ENCODE measurements at regions of chr2 and their contacts with region 1.

Region 1: DNA sequence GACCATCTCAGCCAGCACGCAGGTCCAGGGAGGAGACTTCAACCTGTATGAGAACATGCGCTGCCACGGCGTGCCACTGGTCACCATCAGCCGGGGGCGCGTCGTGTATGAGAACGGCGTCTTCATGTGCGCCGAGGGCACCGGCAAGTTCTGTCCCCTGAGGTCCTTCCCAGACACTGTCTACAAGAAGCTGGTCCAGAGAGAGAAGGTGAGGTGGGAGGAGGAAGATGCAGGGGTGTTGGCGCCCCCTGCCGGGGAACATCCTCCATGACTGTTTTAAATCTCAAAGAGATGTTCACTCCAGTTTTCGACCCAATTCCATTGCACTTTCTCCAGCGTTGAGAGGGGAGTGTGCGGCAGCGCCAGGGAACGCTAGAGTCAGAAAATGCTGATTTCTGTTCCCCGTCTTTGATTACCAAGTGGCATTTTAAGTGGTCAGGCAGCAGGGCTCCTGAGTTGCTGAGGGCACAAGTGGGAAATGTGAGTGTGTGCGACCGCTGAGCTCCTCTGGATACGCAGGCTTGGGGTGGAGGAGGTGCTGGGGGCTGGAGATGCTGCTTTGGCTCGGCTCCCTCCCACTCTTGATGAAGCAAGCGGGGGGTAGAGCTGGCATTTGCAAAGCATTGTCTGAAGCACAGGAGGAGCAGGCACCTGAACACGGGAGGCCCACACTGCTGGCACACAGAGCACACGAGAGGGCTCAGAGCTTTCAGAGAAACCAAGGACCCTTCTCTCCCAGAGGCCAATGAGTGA is 27.7 kb upstream of the MAPRE3 start:
- DNase-seq: peak; percentile 86
- H3K4me3 ChIP-seq: no peak overlapping the region
- H3K27ac ChIP-seq: no peak overlapping the region
- H3K4me1 ChIP-seq: no peaks in the 10 kb centered on the region
- H3K27me3 ChIP-seq: no peaks in the 10 kb centered on the region
- CTCF ChIP-seq: peak; percentile 76 to 93 (median 87)
- POLR2A ChIP-seq: no peak

Region 2: GRCh38 chr2:26846328-26847306 is 96.1 kb before region 1 on chr2:
- intact Hi-C with region 1: loop called (anchors 5 kb)
- DNase-seq: peak; percentile 72
- H3K4me3 ChIP-seq: peak overlapping the region in 1 of 2 donors; percentile 22
- H3K27ac ChIP-seq: no peak overlapping the region
- H3K4me1 ChIP-seq: peaks cover 12% of the 10 kb centered on the region
- H3K27me3 ChIP-seq: no peaks in the 10 kb centered on the region
- CTCF ChIP-seq: peak; percentile 46 to 65 (median 60)
- POLR2A ChIP-seq: no peak